IMR-90 (cell line): ENCODE measurements at regions of chr11 and their contacts with region 1.

Region 1: DNA sequence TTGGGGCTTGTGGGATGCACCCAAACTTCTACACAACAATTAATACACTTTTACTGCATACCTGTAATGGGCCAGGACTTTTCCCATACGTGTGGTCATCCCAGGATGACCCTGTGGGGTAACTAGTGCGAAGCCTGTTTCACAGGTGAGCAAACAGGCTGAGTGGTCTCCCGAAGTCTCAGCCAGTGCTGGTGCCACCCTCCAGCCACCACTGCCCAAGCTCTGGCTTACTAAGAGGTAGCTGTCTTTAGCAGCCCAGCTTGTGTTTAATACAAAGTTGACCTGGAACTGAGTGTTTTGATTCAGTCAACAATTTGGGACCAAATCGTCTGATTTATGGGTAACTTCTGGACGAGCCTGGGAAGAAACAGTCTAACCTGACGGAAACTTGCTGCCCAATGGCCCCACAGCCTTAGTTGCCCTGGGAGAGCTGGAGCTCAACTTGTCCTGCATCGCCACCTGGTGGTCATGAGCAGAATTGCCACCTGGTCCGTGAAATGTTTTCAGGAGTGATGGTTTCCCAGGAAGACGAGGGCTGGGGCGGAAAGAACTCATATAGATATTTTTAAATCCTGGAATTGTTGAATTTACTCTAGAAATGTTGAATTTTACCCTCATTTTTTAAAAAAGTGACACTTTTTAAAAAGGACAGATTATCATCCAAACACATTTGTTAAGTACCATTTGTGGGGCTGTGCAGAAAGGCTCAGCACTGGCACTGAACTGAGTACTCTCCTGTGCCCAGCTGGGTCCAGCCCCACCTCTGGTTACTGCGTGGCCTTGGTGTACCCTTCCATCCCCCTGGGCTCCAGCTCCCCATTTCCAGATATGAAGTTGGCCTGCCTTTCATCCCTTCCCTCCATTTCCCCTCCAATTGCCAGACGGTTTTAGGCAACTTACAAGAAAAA is 95.5 kb upstream of the PARVA start:
- DNase-seq: peak; percentile 82
- ATAC-seq: peak; percentile 55
- H3K4me3 ChIP-seq: no peak overlapping the region
- H3K27ac ChIP-seq: peak overlapping the region; percentile 38
- H3K4me1 ChIP-seq: peaks cover 23% of the 10 kb centered on the region
- H3K27me3 ChIP-seq: no peaks in the 10 kb centered on the region
- CTCF ChIP-seq: peak; percentile 97
- POLR2A ChIP-seq: peak; percentile 40; the same call in 1 of the 2 replicates
- RAD21 ChIP-seq: peak; percentile 98

Region 2: GRCh38 chr11:11798586-11799438 is 483.0 kb before region 1 on chr11:
- CTCF ChIA-PET with region 1: no interaction called
- POLR2A ChIA-PET with region 1: no interaction called
- dilution Hi-C with region 1: no loop called
- in situ Hi-C with region 1: loop called (anchors 5 kb)
- intact Hi-C with region 1: loop called (anchors 1 kb)
- DNase-seq: peak; percentile 78
- ATAC-seq: peak; percentile 99
- H3K4me3 ChIP-seq: no peak overlapping the region
- H3K27ac ChIP-seq: no peak overlapping the region
- H3K4me1 ChIP-seq: peaks cover 2% of the 10 kb centered on the region
- H3K27me3 ChIP-seq: peaks cover 10% of the 10 kb centered on the region
- CTCF ChIP-seq: peak; percentile 90
- POLR2A ChIP-seq: 0 out of 2 replicates have a peak, but pooled peaks have one; percentile 31
- RAD21 ChIP-seq: peak; percentile 87

Region 3: DNA sequence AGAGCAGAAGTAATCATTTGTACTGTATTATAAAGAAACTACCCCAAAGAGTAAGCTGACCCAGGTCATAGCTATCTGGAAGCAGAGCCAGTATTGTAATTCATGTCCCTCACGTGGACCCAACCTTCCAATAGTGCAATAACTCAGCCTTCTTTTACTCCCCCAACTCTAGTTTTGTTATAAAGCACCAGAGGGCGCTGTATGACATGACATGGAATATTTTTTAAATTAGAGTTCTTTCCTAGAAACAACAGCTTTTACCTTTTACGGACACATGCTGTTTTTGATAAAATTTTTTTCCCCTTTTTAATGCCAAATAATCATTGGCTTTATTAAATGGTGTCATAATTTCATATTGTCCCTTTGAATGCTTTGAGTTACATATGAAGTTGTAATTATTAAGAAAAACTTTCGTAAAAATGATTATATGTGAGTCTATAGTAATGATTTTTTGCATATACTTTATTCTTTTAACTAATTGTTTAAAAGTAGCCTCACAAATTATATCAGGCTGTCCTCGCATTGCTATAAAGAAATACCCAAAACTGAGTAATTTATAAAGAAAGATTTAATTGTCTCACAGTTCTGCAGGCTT is 350.3 kb before region 1 on chr11:
- CTCF ChIA-PET with region 1: no interaction called
- POLR2A ChIA-PET with region 1: no interaction called
- dilution Hi-C with region 1: no loop called
- in situ Hi-C with region 1: no loop called
- intact Hi-C with region 1: loop called (anchors 5 kb)
- DNase-seq: peak; percentile 74
- ATAC-seq: peak; percentile 53
- H3K4me3 ChIP-seq: no peak overlapping the region
- H3K27ac ChIP-seq: no peak overlapping the region
- H3K4me1 ChIP-seq: peaks cover 3% of the 10 kb centered on the region
- H3K27me3 ChIP-seq: no peaks in the 10 kb centered on the region
- CTCF ChIP-seq: peak; percentile 74
- POLR2A ChIP-seq: no peak
- RAD21 ChIP-seq: peak; percentile 78

Region 4: GRCh38 chr11:12043959-12044819 is 237.6 kb before region 1 on chr11:
- CTCF ChIA-PET with region 1: interaction called, 8 read pairs
- POLR2A ChIA-PET with region 1: no interaction called
- dilution Hi-C with region 1: no loop called
- in situ Hi-C with region 1: loop called (anchors 5 kb)
- intact Hi-C with region 1: loop called (anchors 1 kb)
- DNase-seq: peak; percentile 100
- ATAC-seq: peak; percentile 75
- H3K4me3 ChIP-seq: 0 out of 2 replicates have a peak overlapping the region, but pooled peaks have one; percentile 2
- H3K27ac ChIP-seq: peak overlapping the region; percentile 88
- H3K4me1 ChIP-seq: peaks cover 22% of the 10 kb centered on the region
- H3K27me3 ChIP-seq: no peaks in the 10 kb centered on the region
- CTCF ChIP-seq: peak; percentile 90
- POLR2A ChIP-seq: peak; percentile 50; the same call in 1 of the 2 replicates
- RAD21 ChIP-seq: peak; percentile 93

Region 5: DNA sequence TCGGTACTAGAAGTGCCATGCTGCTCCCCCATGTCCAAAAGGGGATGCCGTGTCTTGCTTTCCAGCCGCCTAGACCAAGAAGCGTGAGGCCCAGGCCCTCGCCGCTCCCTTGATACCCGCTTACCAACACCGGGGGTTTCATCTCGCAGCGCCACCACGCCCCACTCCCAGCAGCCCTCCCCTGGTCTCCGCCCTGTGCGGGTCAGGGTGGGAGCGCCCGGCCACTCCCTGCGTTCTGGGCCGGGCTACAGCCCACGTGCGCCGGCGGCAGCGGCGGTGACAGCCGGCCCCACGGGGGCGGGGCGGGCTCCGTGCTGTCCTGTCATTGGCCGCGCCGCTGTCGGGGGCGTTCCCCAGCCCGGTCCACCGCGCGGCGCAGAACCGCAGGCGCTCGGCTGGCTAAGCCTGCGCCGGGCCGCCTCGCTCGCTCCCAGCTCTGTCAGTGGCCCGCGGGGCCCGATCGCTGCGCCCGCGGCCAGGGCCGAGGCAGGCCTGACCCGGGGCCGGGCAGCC is 171.6 kb before region 1 on chr11 and contains the start of gene MICAL2:
- CTCF ChIA-PET with region 1: no interaction called
- POLR2A ChIA-PET with region 1: interaction called, 5 read pairs
- dilution Hi-C with region 1: no loop called
- in situ Hi-C with region 1: no loop called
- intact Hi-C with region 1: loop called (anchors 5 kb)
- DNase-seq: peak; percentile 85
- ATAC-seq: peak; percentile 93
- H3K4me3 ChIP-seq: peak within 1 kb of the TSS; percentile 80
- H3K27ac ChIP-seq: peak within 1 kb of the TSS; percentile 71
- H3K4me1 ChIP-seq: peaks cover 30% of the 10 kb centered on the region
- H3K27me3 ChIP-seq: no peaks in the 10 kb centered on the region
- CTCF ChIP-seq: no peak
- POLR2A ChIP-seq: peak; percentile 90
- RAD21 ChIP-seq: no peak
- total RNA-seq, gene MICAL2: 285 and 336 TPM in 2 replicates

Region 6: GRCh38 chr11:12235947-12236743 is 45.7 kb before region 1 on chr11:
- CTCF ChIA-PET with region 1: interaction called, 6 read pairs
- POLR2A ChIA-PET with region 1: no interaction called
- dilution Hi-C with region 1: no loop called
- in situ Hi-C with region 1: no loop called
- intact Hi-C with region 1: loop called (anchors 5 kb)
- DNase-seq: peak; percentile 72
- ATAC-seq: peak; percentile 61
- H3K4me3 ChIP-seq: no peak overlapping the region
- H3K27ac ChIP-seq: peak overlapping the region; percentile 62
- H3K4me1 ChIP-seq: peaks cover 7% of the 10 kb centered on the region
- H3K27me3 ChIP-seq: no peaks in the 10 kb centered on the region
- CTCF ChIP-seq: peak; percentile 68
- POLR2A ChIP-seq: no peak
- RAD21 ChIP-seq: peak; percentile 76